ENCODE measurements at regions of chr4 and their contacts with region 1.

Region 1: GRCh38 chr4:141702472-141703182 is 66.2 kb downstream of the IL15 start:
- DNase-seq: no peak
- H3K4me3 ChIP-seq: no peak overlapping the region
- H3K27ac ChIP-seq: no peak overlapping the region
- H3K4me1 ChIP-seq: no peaks in the 10 kb centered on the region
- H3K27me3 ChIP-seq: no peaks in the 10 kb centered on the region
- CTCF ChIP-seq: peak; percentile 59 to 75 (median 72)
- EP300 ChIP-seq: no peak
- POLR2A ChIP-seq: no peak
- RAD21 ChIP-seq: peak; percentile 65 to 69

Region 2: GRCh38 chr4:141346144-141346543 is 356.5 kb before region 1 on chr4:
- CTCF ChIA-PET with region 1: interaction called, 12 read pairs
- POLR2A ChIA-PET with region 1: no interaction called
- DNase-seq: no peak
- H3K4me3 ChIP-seq: no peak overlapping the region
- H3K27ac ChIP-seq: no peak overlapping the region
- H3K4me1 ChIP-seq: no peaks in the 10 kb centered on the region
- H3K27me3 ChIP-seq: no peaks in the 10 kb centered on the region
- CTCF ChIP-seq: peak in 1 of 3 experiments; percentile 17; a peak in 1 of 4 replicates
- EP300 ChIP-seq: no peak
- POLR2A ChIP-seq: no peak
- RAD21 ChIP-seq: peak; percentile 62 to 64

Region 3: DNA sequence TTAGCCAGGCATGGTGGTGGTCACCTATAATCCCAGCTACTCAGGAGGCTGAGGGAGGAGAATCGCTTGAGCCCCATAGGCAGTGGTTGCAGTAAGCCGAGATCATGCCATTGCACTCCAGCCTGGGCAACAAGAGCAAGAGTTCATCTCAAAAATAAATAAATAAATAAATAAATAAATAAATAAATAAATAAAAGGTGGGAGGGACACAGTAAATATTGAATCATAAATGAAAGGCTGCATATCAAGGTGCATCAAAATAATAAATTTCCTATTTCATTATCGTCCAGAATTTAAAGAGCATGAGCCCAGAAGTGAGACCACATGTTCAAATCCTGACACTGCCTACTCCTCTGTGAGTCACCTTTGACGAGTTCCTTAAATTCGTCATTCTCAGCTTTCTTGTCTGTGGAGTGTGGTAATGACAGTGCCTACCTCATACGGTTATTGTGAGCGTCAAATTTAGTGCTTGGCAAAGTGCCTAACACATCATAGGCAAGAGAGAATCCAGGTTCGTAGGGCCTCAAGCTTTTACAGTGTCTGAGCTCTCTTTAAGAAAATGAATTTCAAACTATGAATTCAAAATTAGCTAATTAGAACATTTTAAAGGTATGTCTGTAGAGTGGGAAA is 16.4 kb before region 1 on chr4:
- CTCF ChIA-PET with region 1: interaction called, 18 read pairs
- POLR2A ChIA-PET with region 1: no interaction called
- DNase-seq: no peak
- H3K4me3 ChIP-seq: no peak overlapping the region
- H3K27ac ChIP-seq: no peak overlapping the region
- H3K4me1 ChIP-seq: no peaks in the 10 kb centered on the region
- H3K27me3 ChIP-seq: no peaks in the 10 kb centered on the region
- CTCF ChIP-seq: no peak
- EP300 ChIP-seq: no peak
- POLR2A ChIP-seq: no peak
- RAD21 ChIP-seq: no peak